Psoas muscle (tissue), 8 donors: ENCODE measurements at regions of chr2 and their contacts with region 1.

Region 1: GRCh38 chr2:192162392-192163042 is 32.2 kb downstream of the TMEFF2 start:
- DNase-seq: peak in 1 of 2 donors; percentile 14
- ATAC-seq: peak; percentile 49 to 75 (median 63)
- H3K4me3 ChIP-seq: peak overlapping the region; percentile 31
- H3K27ac ChIP-seq: no peak overlapping the region
- H3K4me1 ChIP-seq: peaks cover 4% of the 10 kb centered on the region
- H3K27me3 ChIP-seq: peaks cover 0 to 2% (median 0%) of the 10 kb centered on the region in 3 donors
- CTCF ChIP-seq: peak; percentile 94

Region 2: GRCh38 chr2:191811807-191812602 is 350.5 kb before region 1 on chr2:
- intact Hi-C with region 1: loop called (anchors 1 to 2 kb)
- DNase-seq: peak; percentile 38 to 58
- ATAC-seq: peak; percentile 46 to 69 (median 52)
- H3K4me3 ChIP-seq: peak overlapping the region; percentile 24
- H3K27ac ChIP-seq: no peak overlapping the region
- H3K4me1 ChIP-seq: no peaks in the 10 kb centered on the region
- H3K27me3 ChIP-seq: no peaks in the 10 kb centered on the region
- CTCF ChIP-seq: peak; percentile 73